Panc1 (cell line): ENCODE measurements at regions of chr9 and their contacts with region 1.

Region 1: GRCh38 chr9:125089331-125089730 is 54.0 kb downstream of the SCAI start:
- DNase-seq: no peak
- ATAC-seq: no peak
- H3K4me3 ChIP-seq: no peak overlapping the region
- H3K27ac ChIP-seq: no peak overlapping the region
- H3K4me1 ChIP-seq: no peaks in the 10 kb centered on the region
- H3K27me3 ChIP-seq: no peaks in the 10 kb centered on the region
- CTCF ChIP-seq: no peak

Region 2: GRCh38 chr9:125106285-125106893 is 17.1 kb after region 1 on chr9:
- CTCF ChIA-PET with region 1: no interaction called
- POLR2A ChIA-PET with region 1: interaction called, 13 read pairs
- in situ Hi-C with region 1: no loop called
- intact Hi-C with region 1: no loop called
- DNase-seq: no peak
- ATAC-seq: no peak
- H3K4me3 ChIP-seq: no peak overlapping the region
- H3K27ac ChIP-seq: no peak overlapping the region
- H3K4me1 ChIP-seq: no peaks in the 10 kb centered on the region
- H3K27me3 ChIP-seq: no peaks in the 10 kb centered on the region
- CTCF ChIP-seq: no peak

Region 3: GRCh38 chr9:125204477-125204876 is 115.1 kb after region 1 on chr9:
- CTCF ChIA-PET with region 1: no interaction called
- POLR2A ChIA-PET with region 1: no interaction called
- in situ Hi-C with region 1: no loop called
- intact Hi-C with region 1: no loop called
- DNase-seq: no peak
- ATAC-seq: no peak
- H3K4me3 ChIP-seq: no peak overlapping the region
- H3K27ac ChIP-seq: no peak overlapping the region
- H3K4me1 ChIP-seq: peaks cover 6% of the 10 kb centered on the region
- H3K27me3 ChIP-seq: no peaks in the 10 kb centered on the region
- CTCF ChIP-seq: no peak

Region 4: DNA sequence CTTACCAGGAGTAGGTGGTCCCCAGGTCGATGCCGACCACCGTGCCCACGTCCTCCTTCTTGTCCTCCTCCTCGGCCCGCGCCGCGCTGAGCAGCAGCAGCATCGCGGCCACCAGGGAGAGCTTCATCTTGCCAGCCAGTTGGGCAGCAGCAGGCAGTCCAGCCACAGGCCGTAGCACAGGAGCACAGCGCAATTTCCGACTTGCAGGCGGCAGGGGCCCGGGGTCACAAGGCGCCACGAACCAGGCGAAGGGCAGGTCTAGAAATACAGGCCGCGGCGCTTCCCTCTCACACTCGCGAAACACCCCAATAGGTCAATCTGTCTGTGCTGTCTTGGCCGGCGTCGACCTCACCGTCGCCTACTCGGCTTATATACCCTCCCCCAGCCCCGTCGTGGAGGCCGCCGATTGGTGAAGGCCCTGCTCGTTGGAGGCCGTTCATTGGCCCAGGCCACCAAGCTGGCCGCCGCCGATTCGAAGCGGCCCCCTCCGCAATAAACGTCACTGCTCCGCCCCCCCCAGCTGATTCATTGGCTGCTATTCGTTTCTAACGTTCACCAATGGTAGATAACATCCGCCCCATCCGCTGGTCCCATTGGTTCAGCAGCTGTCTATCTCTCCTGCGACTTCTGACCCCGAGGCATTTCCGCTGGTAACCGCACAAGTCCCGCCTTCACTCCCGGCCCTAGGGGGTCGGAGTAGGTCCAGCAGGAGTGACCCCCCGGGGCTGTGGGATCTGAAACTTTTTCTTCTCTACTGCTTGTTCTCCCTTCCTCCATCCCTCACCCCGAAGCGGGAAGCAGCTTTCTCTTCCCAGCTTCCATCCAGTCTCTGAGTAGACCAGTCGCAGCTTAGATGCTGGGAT is 151.9 kb after region 1 on chr9 and contains the start of gene HSPA5:
- CTCF ChIA-PET with region 1: no interaction called
- POLR2A ChIA-PET with region 1: no interaction called
- in situ Hi-C with region 1: no loop called
- intact Hi-C with region 1: no loop called
- DNase-seq: peak; percentile 97
- ATAC-seq: peak; percentile 95
- H3K4me3 ChIP-seq: peak within 1 kb of the TSS; percentile 89 to 95
- H3K27ac ChIP-seq: peak within 1 kb of the TSS; percentile 98
- H3K4me1 ChIP-seq: peaks cover 37% of the 10 kb centered on the region
- H3K27me3 ChIP-seq: no peaks in the 10 kb centered on the region
- CTCF ChIP-seq: no peak
- total RNA-seq, gene HSPA5: 281 TPM